Calu3 (cell line): ENCODE measurements at regions of chr14 and their contacts with region 1.

Region 1: GRCh38 chr14:87852107-87852506 is 140.9 kb downstream of the GALC start:
- DNase-seq: no peak
- H3K4me3 Mint-ChIP-seq: no peak overlapping the region
- H3K27ac Mint-ChIP-seq: no peak overlapping the region
- H3K4me1 Mint-ChIP-seq: no peaks in the 10 kb centered on the region
- H3K27me3 Mint-ChIP-seq: peaks cover 20% of the 10 kb centered on the region
- CTCF ChIP-seq: no peak

Region 2: DNA sequence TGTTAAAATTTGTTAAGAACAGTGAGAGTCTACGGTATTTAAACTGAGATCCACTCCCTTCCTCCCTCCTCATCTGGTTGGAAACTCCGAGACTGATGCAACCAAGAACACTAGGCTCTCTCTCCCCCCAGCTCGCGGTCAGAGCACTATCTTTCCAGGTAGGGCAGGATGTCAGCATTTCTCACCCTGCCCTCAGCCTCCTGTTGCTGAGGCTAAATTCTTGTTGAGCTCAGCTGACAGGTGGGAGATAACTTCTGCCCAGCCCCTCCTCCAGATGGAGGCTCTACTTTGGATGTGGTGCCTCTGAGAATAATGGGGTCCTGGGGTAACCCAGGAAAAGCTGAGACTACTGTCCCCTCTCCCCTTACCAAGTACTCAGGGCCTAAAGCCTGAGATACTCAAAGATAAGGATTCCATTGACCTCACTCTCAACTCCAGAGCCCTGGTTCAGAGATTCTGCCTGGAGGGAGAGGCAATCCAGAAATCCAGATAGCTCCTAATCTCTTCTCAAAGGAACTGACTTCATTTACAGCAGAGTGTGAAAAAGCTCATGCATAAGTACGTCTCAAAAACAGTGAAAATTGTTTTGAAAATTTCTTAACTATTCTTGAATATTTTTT is 830.5 kb after region 1 on chr14:
- CTCF ChIA-PET with region 1: interaction called, 10 read pairs
- intact Hi-C with region 1: no loop called
- DNase-seq: no peak
- H3K4me3 Mint-ChIP-seq: no peak overlapping the region
- H3K27ac Mint-ChIP-seq: no peak overlapping the region
- H3K4me1 Mint-ChIP-seq: no peaks in the 10 kb centered on the region
- H3K27me3 Mint-ChIP-seq: no peaks in the 10 kb centered on the region
- CTCF ChIP-seq: no peak